Pancreas (tissue), 10 donors: ENCODE measurements at regions of chr5 and their contacts with region 1.

Region 1: GRCh38 chr5:137660349-137660817 is 75.5 kb downstream of the KLHL3 start:
- DNase-seq: peak; percentile 66 to 83 (median 67)
- ATAC-seq: peak; percentile 87 to 97 (median 96)
- H3K4me3 ChIP-seq: no peak overlapping the region
- H3K27ac ChIP-seq: no peak overlapping the region
- H3K4me1 ChIP-seq: peaks cover under 1 to 11% (median 5%) of the 10 kb centered on the region in 3 donors
- H3K27me3 ChIP-seq: no peaks in the 10 kb centered on the region
- CTCF ChIP-seq: peak; percentile 42 to 76 (median 58)

Region 2: DNA sequence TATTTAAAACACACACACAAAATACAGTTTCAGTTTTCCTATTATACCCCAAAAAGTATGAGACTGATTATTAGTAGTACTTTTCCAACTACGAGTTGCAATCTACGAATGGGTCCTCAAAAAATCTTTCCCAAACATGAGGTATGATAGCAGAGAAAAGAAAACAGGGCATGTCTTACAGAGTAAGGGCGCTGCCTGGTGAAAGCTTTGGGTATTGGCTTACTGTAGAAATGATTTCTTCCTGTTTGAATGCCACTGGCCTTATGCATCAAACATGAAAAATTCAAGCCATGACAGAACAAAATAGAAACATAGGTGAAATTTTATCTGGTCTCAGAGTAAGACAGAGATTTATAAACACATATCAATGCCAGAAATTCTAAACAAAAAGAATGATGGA is 609.2 kb before region 1 on chr5:
- intact Hi-C with region 1: no loop called
- DNase-seq: no peak
- ATAC-seq: no peak
- H3K4me3 ChIP-seq: no peak overlapping the region
- H3K27ac ChIP-seq: no peak overlapping the region
- H3K4me1 ChIP-seq: no peaks in the 10 kb centered on the region
- H3K27me3 ChIP-seq: no peaks in the 10 kb centered on the region
- CTCF ChIP-seq: no peak

Region 3: DNA sequence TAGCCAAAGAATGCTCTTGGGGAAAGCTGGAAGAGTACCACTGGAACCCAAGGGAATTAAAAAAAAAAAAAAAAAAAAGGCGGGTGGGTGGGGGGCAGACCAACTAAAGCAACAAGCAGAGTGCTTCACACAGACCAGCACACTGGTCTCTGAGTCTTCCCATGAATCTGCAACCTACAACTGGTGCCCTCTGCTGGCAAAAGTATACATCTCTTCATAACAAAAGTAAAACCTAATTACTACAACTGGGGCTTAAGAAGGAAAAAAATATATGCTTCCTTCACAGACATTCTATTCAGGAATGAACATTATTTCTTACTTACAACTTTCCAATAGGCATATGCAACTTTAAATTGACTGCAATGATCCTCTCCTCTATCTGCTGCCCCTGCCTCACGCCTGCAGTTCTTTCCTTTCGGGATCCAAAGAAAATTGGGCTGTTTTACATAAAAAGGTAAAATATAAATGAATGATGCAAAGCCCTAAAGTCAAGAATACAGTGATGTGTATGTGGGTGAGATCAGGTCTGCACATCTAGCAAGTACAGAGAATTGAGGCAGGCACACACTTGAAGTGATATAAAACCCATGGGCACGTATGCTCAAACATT is 82.8 kb after region 1 on chr5:
- intact Hi-C with region 1: loop called in 2 of 3 experiments (anchors 2 to 5 kb)
- DNase-seq: peak in 4 of 6 donors; percentile 30 to 67 (median 47)
- ATAC-seq: peak; percentile 55 to 93 (median 86)
- H3K4me3 ChIP-seq: no peak overlapping the region
- H3K27ac ChIP-seq: no peak overlapping the region
- H3K4me1 ChIP-seq: peaks cover under 1 to 15% (median 6%) of the 10 kb centered on the region in 3 donors
- H3K27me3 ChIP-seq: no peaks in the 10 kb centered on the region
- CTCF ChIP-seq: peak; percentile 25 to 60 (median 42)

Region 4: DNA sequence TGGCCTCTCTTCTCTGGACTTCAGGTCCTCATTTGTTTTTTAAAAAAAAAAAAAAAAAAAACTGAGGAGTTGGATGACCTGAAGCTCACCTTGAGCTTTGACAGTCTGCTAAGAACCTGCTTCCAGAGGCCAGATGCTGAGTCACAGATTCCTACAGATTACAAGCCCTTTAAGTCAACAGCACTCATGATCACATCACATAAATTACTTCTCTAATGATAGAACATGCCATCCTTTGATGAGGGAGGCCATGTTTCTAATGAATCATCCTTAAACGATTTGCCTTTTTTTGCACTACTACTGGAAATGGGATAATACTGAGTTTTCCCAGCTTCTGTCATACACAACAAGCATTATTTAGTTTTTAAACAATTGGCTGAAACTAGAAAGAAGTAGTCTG is 173.1 kb after region 1 on chr5:
- intact Hi-C with region 1: no loop called
- DNase-seq: peak in 1 of 6 donors; percentile 17
- ATAC-seq: peak in 3 of 4 donors; percentile 38 to 79 (median 73)
- H3K4me3 ChIP-seq: no peak overlapping the region
- H3K27ac ChIP-seq: no peak overlapping the region
- H3K4me1 ChIP-seq: peaks cover 0 to 9% (median 0%) of the 10 kb centered on the region in 3 donors
- H3K27me3 ChIP-seq: no peaks in the 10 kb centered on the region
- CTCF ChIP-seq: no peak

Region 5: DNA sequence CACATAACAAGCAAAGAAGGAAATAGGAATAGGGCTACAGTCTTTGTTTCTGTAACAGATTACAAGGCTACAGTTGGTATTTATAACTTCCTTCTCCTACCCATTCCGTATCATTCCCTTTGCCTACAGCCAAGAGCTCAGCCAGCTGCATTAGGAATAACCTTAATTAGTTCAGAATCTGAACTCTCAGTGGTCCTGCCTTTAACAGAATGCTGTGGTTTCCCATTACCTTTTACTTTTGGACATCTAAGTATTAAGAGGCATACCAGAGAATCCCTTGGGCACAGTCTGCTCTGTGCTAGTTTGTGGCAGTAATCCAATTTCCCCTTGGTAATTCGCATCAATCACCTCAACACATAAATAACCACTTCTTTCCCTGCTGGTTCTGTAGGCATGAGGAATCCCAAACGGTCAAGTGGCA is 273.1 kb after region 1 on chr5:
- intact Hi-C with region 1: no loop called
- DNase-seq: no peak
- ATAC-seq: peak in 2 of 4 donors; percentile 40 to 63
- H3K4me3 ChIP-seq: no peak overlapping the region
- H3K27ac ChIP-seq: no peak overlapping the region
- H3K4me1 ChIP-seq: no peaks in the 10 kb centered on the region
- H3K27me3 ChIP-seq: no peaks in the 10 kb centered on the region
- CTCF ChIP-seq: no peak

Region 6: DNA sequence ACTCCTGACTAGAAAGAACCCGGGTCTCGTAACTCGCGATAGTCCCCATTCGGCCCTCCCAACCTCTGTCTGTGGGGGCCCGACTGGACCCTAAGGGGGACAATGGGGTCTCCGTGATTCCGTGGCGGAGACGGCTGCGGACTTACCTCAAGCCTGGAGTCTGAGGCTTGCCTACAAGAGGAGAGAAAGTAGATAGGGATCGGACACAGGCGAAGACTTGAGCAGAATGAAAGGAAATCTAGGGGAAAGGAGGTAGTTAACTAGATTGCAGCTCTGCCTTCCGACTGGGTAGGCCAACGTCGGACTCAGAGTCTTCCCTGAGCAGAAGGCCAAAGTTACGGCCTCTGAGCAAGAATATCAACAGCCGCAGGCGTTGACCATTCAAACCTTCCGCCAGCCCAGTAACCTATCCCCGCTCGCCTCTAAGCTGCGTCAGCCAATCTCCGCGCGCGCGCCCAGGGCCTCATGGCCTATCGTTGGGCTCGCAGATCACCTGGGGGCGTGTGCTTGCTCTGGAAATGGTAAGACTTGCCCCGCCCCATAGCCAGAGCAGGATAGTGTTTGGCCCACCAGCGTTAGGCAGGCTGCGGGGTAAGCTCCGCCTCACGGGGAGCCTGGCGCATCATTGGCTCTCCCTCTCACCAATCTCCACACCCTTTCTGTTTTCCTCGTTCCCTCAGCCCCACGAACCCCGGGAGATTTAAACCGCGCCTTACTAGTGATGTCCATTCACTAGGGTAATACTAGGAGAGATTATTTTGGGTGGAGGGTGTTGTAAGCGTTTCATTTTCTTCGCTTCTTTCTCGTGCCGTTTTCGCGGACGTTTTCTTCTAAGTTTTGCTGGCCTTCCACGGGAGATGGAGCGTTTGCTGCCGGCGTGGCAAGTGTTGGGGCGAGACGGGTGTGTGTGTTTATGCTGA is 671.3 kb after region 1 on chr5 and contains the start of gene CDC25C:
- intact Hi-C with region 1: no loop called
- DNase-seq: peak; percentile 94 to 98 (median 97)
- ATAC-seq: peak; percentile 99 to 100 (median 100)
- H3K4me3 ChIP-seq: peak within 1 kb of the TSS; percentile 20 to 52 (median 28)
- H3K27ac ChIP-seq: no peak within 1 kb of the TSS
- H3K4me1 ChIP-seq: peaks cover 0 to 8% (median 6%) of the 10 kb centered on the region in 3 donors
- H3K27me3 ChIP-seq: no peaks in the 10 kb centered on the region
- CTCF ChIP-seq: no peak
- total RNA-seq, gene CDC25C: 0.09 to 0.19 (median 0.17) TPM in 3 of 6 donors, not detected in the others